Ascending aorta (tissue), 2 donors: ENCODE measurements at regions of chr10 and their contacts with region 1.

Region 1: GRCh38 chr10:58781873-58782488 is 269.3 kb downstream of the BICC1 start:
- DNase-seq: no peak
- H3K4me3 ChIP-seq: no peak overlapping the region
- H3K27ac ChIP-seq: no peak overlapping the region
- H3K4me1 ChIP-seq: peaks cover 0 to 4% of the 10 kb centered on the region in 2 donors
- H3K27me3 ChIP-seq: no peaks in the 10 kb centered on the region
- CTCF ChIP-seq: peak; percentile 34 to 70 (median 58)

Region 2: DNA sequence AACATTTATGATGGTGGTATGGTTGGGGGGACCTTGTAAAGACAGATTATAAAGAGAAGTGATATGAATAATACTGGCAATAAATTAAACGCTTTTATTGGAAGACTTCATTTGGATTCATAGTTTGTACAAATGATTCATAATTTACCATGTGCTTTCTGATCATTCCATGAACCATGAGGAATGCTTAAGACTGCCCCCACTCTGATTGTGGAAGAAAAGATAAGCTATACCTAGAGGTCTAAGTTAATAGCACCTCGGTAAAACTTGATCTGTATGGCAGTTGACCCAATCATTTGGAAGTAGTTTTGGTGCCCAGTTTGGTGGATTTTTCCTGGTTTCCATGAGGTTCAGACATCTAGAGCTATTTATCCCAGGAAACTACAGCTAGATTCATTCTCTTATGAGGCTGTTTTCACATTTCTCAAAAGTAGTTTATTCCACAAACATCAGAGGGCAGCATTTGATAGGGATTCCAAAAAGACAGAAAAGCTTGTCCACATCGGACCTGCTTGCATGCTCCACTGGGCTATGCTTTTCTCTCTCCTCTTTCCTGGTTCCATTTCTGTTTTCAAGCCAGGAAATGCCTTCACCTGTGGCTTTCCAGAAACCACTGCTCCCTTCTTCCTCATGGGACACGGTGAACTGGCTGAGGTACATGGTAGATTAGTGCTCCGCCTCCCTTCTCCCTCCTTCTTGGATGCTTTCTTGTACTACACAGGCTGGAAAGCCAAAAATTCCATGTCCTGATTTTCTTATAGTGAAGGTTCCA is 367.5 kb before region 1 on chr10:
- intact Hi-C with region 1: loop called (anchors 5 kb)
- DNase-seq: no peak
- H3K4me3 ChIP-seq: peak overlapping the region in 1 of 2 donors; percentile 10
- H3K27ac ChIP-seq: no peak overlapping the region
- H3K4me1 ChIP-seq: peaks cover 0 to 6% of the 10 kb centered on the region in 2 donors
- H3K27me3 ChIP-seq: no peaks in the 10 kb centered on the region
- CTCF ChIP-seq: peak in 2 of 3 experiments; percentile 52 to 63

Region 3: DNA sequence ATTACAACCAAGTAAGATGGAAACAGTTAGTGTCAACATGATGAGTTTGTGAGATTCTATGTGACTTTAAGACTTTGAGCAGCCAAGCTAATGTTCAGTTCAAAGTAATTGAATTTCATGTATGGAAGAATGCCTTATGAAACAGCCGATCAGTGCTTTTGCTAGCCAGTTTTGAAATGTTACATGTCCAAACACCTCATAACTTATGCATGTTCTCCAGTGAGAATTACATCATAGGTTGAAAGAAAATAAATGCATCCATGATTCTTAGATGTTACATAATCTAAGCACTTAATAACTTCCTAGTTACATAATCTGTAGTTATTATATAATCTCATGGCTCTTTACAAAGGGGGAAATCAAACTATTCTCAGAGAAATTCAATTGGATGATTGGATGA is 58.0 kb before region 1 on chr10:
- intact Hi-C with region 1: no loop called
- DNase-seq: no peak
- H3K4me3 ChIP-seq: no peak overlapping the region
- H3K27ac ChIP-seq: no peak overlapping the region
- H3K4me1 ChIP-seq: peaks cover 0 to 9% of the 10 kb centered on the region in 2 donors
- H3K27me3 ChIP-seq: no peaks in the 10 kb centered on the region
- CTCF ChIP-seq: no peak

Region 4: DNA sequence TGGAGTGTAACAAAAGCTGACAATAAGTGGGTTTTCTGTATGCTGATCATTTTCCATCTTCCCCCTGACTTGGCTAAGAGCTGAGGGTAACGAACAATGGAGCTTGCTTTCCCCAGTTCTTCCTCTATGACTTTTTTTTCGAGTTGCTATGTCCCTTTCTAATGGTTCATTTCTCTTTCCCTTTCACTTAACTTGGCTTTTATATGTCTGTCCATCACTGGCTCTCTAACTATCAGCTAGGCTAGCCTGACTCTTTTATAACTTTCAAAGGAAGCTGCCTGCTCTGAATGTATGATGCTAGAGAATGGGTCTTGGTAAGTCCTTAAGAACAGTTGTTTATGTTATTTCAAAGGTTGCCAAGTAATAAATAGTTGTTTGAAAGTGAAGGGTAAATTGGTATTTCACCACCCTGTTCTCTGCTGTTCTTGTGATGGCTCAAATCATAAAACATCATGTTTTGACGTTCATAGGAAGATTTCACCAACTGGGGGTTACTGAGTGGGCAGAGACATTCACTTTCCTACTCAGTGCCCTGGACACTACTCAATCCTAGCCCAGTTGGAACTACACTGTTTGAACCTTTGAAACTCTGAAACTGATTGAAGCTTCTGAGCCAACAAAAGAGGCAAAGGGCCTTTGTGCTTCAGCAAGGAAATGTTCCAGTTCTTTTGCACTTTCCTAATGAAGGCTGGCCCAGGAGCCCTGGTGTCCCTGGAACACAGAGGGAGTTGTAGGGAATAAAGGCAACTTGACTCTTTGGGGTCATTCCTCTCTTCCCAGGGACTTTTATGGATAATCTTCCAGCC is 309.0 kb after region 1 on chr10:
- intact Hi-C with region 1: loop called (anchors 5 kb)
- DNase-seq: no peak
- H3K4me3 ChIP-seq: no peak overlapping the region
- H3K27ac ChIP-seq: peak overlapping the region; percentile 63 to 68
- H3K4me1 ChIP-seq: peaks cover 0 to 23% of the 10 kb centered on the region in 2 donors
- H3K27me3 ChIP-seq: no peaks in the 10 kb centered on the region
- CTCF ChIP-seq: no peak

Region 5: GRCh38 chr10:60048091-60048501 is 1266.1 kb after region 1 on chr10:
- intact Hi-C with region 1: loop called (anchors 10 kb)
- DNase-seq: no peak
- H3K4me3 ChIP-seq: no peak overlapping the region
- H3K27ac ChIP-seq: no peak overlapping the region
- H3K4me1 ChIP-seq: peaks cover 7 to 9% of the 10 kb centered on the region in 2 donors
- H3K27me3 ChIP-seq: no peaks in the 10 kb centered on the region
- CTCF ChIP-seq: peak; percentile 28 to 44 (median 41)